Heart left ventricle (tissue), 16 donors: ENCODE measurements at regions of chr22 and their contacts with region 1.

Region 1: DNA sequence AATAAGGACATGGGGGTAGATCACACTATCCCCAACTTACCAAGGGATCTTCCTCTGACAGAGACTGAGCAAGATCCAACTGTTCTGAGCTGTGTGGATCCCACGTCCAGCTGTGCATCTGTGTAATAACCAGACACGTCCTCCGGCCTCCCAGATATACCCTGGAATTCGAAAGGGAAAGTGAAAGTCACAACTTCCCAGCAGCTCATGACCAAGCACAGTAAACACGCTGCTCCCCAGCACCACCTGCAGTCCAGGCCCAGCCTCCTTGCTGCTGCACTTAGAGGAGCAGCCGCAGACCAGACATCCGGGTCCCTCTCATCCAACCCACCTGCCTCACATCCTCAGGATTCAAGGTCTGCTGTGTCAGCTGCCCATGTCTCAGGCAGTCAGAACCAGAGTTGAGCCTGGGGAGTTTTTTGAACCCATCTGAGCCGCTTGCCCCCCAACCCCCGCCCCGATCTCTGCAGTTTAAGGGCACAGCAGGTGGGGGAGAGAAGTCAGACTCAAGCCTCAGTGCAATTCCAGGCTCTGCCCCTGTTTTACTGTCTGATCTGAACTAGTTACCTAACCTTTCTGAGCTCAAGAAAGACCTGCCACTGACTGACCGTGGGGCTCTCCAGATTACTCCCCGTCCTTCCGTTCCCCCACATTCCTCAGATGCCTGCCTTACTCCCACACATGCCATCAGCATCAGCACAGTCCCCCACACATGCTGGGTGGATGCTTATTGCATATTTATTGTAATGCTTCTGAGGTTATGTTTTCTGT is at the start of gene APOL2:
- DNase-seq: peak; percentile 90 to 95 (median 92)
- ATAC-seq: peak; percentile 94 to 98 (median 96)
- H3K4me3 ChIP-seq: peak within 1 kb of the TSS; percentile 56 to 86 (median 72)
- H3K27ac ChIP-seq: peak within 1 kb of the TSS; percentile 78 to 98 (median 92)
- H3K4me1 ChIP-seq: peaks cover 14 to 64% (median 52%) of the 10 kb centered on the region in 12 donors
- H3K27me3 ChIP-seq: no peaks in the 10 kb centered on the region
- CTCF ChIP-seq: peak; percentile 50 to 88 (median 72)
- POLR2A ChIP-seq: peak; percentile 10 to 88
- total RNA-seq, gene APOL2: 26.6 to 213 (median 55.9) TPM

Region 2: DNA sequence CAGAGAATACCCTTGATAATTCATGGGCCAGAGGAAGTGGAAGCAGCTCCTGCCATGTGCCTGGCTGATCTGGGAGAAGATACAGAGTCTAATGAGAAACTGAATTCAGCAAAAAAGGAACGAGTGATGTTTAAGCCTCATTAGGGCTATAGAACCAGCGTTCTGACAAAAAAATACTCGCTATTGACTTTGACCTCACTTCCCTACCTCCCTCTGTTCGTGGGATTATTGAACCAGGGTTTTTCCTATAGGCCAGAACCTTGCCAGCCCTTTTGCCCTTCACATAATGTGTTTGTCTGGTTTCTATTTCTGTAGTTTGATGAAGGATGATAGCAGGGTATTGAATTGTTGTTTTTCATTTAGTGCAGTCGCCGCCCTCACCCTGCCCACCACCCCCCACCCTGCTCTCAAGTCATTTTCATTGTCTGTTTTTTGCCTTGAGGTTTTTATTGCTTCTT is 203.4 kb before region 1 on chr22:
- intact Hi-C with region 1: no loop called
- DNase-seq: no peak
- ATAC-seq: no peak
- H3K4me3 ChIP-seq: no peak overlapping the region
- H3K27ac ChIP-seq: peak overlapping the region in 7 of 12 donors; percentile 13 to 71 (median 32)
- H3K4me1 ChIP-seq: peaks cover 0 to 15% (median 2%) of the 10 kb centered on the region in 12 donors
- H3K27me3 ChIP-seq: no peaks in the 10 kb centered on the region
- CTCF ChIP-seq: no peak
- POLR2A ChIP-seq: no peak

Region 3: DNA sequence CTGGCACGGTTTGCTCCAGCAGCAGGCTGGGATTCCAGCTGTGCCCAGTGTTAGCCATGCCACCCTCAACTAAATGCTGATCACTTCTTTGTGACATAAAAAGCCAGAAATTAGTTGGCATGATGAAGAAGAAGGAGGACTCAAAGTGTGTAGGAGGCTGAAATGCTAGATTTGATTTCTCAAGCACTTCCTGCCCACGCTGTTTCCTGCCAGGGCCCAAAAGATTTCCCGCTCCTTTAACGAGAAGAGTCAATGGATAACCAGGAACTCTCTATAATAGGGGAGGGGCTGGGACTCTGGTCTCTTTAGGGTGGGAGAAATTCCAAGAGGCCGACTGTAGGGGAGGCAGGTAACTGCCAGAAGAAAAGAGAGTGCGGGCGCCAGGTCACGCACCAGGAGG is 105.4 kb before region 1 on chr22:
- intact Hi-C with region 1: no loop called
- DNase-seq: peak in 1 of 5 donors; percentile 15
- ATAC-seq: no peak
- H3K4me3 ChIP-seq: no peak overlapping the region
- H3K27ac ChIP-seq: no peak overlapping the region
- H3K4me1 ChIP-seq: peaks cover 0 to 9% (median 0%) of the 10 kb centered on the region in 12 donors
- H3K27me3 ChIP-seq: no peaks in the 10 kb centered on the region
- CTCF ChIP-seq: no peak
- POLR2A ChIP-seq: no peak

Region 4: DNA sequence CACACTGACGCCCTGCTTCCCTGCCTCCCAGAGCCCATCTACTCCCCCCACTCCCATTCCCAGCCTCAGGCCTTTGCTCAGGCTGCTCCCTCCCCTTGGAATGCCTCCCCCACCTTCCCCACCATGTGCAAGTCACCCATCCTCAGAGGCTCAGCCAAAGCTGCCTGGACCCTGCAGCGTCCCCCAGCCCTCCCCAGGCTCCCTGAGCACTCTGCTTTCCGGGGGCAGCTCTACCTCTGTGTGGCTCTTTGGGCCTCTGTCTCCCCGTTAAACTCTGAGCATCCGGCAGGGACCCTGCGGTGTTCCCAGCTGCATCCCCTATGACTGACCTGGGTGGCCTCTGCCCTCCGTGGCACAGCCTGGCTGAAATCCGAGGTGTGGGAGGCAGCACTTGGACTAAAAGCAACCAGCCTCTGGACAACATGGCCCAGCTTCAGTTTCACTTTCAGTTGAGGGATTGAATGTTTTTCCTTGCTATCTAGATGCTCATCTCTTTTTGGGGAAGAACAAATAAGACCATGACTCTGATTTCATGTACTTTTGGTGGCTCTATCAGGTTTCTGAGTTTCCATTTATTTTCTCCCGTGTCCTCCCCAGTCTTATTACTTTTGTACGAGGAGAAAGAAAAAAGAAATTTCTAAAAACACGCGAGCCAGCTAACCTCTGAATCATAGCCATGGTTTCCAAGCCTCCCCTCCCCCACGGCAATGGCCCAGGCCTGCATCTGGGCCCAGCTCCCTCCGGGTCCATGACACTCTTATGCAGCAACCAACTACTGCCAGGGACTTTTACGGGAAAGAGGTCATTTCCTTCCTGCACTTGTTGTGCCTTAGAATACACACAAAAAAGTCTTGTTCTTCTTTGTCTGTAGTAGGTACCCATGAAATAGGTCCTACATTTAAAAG is 82.8 kb before region 1 on chr22:
- intact Hi-C with region 1: loop called in 1 of 10 experiments (anchors 10 kb)
- DNase-seq: peak; percentile 86 to 93 (median 91)
- ATAC-seq: peak; percentile 66 to 85 (median 82)
- H3K4me3 ChIP-seq: peak overlapping the region; percentile 5 to 79 (median 63)
- H3K27ac ChIP-seq: peak overlapping the region; percentile 86 to 97 (median 91)
- H3K4me1 ChIP-seq: peaks cover 11 to 93% (median 49%) of the 10 kb centered on the region in 12 donors
- H3K27me3 ChIP-seq: no peaks in the 10 kb centered on the region
- CTCF ChIP-seq: no peak
- POLR2A ChIP-seq: peak in 1 of 2 donors; percentile 61

Region 5: GRCh38 chr22:36171941-36172340 is 67.6 kb before region 1 on chr22:
- intact Hi-C with region 1: no loop called
- DNase-seq: no peak
- ATAC-seq: no peak
- H3K4me3 ChIP-seq: no peak overlapping the region
- H3K27ac ChIP-seq: no peak overlapping the region
- H3K4me1 ChIP-seq: no peaks in the 10 kb centered on the region
- H3K27me3 ChIP-seq: no peaks in the 10 kb centered on the region
- CTCF ChIP-seq: no peak
- POLR2A ChIP-seq: no peak

Region 6: DNA sequence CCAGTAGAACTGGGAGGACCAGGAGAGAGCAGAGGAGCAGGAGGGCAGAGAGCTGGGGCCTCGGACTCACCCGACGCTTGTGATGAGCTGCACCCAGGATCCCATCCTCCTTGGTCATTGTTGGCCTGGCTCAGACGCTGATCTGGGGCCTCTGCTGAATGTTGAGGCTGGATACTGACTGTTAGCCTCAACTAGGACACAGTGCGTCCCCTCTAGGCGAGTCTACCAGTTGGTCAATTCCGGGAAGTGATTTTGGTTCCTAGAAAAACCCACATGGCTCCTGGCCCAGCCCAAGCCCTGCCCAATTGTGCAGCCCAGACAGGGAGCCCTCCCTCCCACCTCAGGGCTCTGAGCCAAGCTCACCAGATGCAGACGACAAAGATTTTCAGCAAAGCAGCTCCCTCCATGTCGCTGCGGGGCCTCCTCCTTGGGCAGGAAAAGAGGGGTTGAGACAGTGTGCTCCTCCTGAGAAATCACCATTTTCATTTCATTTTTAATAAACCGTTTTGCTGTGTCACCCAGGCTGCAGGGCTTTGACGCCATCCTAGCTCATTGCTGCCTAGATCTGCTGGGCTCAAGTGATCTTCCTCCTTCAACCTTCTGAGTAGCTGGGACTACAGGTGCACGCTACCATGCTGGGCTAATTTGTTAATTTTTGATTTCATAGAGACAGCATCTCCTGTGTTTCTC is 37.8 kb before region 1 on chr22 and contains the start of gene APOL4:
- intact Hi-C with region 1: loop called in 7 of 10 experiments (anchors 1 to 5 kb)
- DNase-seq: peak; percentile 85 to 92 (median 88)
- ATAC-seq: peak; percentile 75 to 91 (median 84)
- H3K4me3 ChIP-seq: peak within 1 kb of the TSS in 10 of 12 donors; percentile 2 to 57 (median 44)
- H3K27ac ChIP-seq: peak within 1 kb of the TSS; percentile 44 to 95 (median 72)
- H3K4me1 ChIP-seq: peaks cover 0 to 70% (median 38%) of the 10 kb centered on the region in 12 donors
- H3K27me3 ChIP-seq: no peaks in the 10 kb centered on the region
- CTCF ChIP-seq: peak in 2 of 12 donors; percentile 6 to 22
- POLR2A ChIP-seq: peak in 1 of 2 donors; percentile 45
- total RNA-seq, gene APOL4: 1.7 to 26.5 (median 5.7) TPM in 7 of 9 donors, not detected in the others

Region 7: GRCh38 chr22:36286471-36287224 is 47.1 kb after region 1 on chr22:
- intact Hi-C with region 1: no loop called
- DNase-seq: peak; percentile 75 to 85 (median 79)
- ATAC-seq: peak; percentile 74 to 88 (median 79)
- H3K4me3 ChIP-seq: no peak overlapping the region
- H3K27ac ChIP-seq: peak overlapping the region in 10 of 12 donors; percentile 25 to 88 (median 60)
- H3K4me1 ChIP-seq: peaks cover 0 to 24% (median 13%) of the 10 kb centered on the region in 12 donors
- H3K27me3 ChIP-seq: no peaks in the 10 kb centered on the region
- CTCF ChIP-seq: peak; percentile 75 to 96 (median 88)
- POLR2A ChIP-seq: no peak